Activated CD4-positive, alpha-beta T cell treated with anti-CD3 and anti-CD28 coated beads, Interleukin-2, amount 10 ng/mL, durations not matched to agents 24 days and 14 days (primary cell): ENCODE measurements at regions of chr13 and their contacts with region 1.

Region 1: GRCh38 chr13:32427852-32428580 is at the start of gene N4BP2L1:
- DNase-seq: peak; percentile 94
- H3K4me3 Mint-ChIP-seq: peak within 1 kb of the TSS; percentile 99
- H3K27ac Mint-ChIP-seq: peak within 1 kb of the TSS; percentile 98
- H3K4me1 Mint-ChIP-seq: peaks cover 44% of the 10 kb centered on the region
- H3K27me3 Mint-ChIP-seq: no peaks in the 10 kb centered on the region
- total RNA-seq, gene N4BP2L1: 16.6 and 17.9 TPM in 2 replicates

Region 2: DNA sequence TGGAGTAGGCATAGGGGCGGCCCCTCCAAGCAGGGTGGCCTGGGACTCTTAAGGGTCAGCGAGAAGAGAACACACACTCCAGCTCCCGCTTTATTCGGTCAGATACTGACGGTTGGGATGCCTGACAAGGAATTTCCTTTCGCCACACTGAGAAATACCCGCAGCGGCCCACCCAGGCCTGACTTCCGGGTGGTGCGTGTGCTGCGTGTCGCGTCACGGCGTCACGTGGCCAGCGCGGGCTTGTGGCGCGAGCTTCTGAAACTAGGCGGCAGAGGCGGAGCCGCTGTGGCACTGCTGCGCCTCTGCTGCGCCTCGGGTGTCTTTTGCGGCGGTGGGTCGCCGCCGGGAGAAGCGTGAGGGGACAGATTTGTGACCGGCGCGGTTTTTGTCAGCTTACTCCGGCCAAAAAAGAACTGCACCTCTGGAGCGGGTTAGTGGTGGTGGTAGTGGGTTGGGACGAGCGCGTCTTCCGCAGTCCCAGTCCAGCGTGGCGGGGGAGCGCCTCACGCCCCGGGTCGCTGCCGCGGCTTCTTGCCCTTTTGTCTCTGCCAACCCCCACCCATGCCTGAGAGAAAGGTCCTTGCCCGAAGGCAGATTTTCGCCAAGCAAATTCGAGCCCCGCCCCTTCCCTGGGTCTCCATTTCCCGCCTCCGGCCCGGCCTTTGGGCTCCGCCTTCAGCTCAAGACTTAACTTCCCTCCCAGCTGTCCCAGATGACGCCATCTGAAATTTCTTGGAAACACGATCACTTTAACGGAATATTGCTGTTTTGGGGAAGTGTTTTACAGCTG is 112.6 kb before region 1 on chr13 and contains the starts of genes BRCA2 and ZAR1L:
- intact Hi-C with region 1: loop called (anchors 1 kb)
- DNase-seq: peak; percentile 97
- H3K4me3 Mint-ChIP-seq: peak within 1 kb of the TSS; percentile 96
- H3K27ac Mint-ChIP-seq: peak within 1 kb of the TSS; percentile 100
- H3K4me1 Mint-ChIP-seq: peaks cover 24% of the 10 kb centered on the region
- H3K27me3 Mint-ChIP-seq: no peaks in the 10 kb centered on the region
- total RNA-seq, gene BRCA2: 23.1 and 24.7 TPM in 2 replicates
- total RNA-seq, gene ZAR1L: 0.19 TPM in 1 of 2 replicates, not detected in the other

Region 3: DNA sequence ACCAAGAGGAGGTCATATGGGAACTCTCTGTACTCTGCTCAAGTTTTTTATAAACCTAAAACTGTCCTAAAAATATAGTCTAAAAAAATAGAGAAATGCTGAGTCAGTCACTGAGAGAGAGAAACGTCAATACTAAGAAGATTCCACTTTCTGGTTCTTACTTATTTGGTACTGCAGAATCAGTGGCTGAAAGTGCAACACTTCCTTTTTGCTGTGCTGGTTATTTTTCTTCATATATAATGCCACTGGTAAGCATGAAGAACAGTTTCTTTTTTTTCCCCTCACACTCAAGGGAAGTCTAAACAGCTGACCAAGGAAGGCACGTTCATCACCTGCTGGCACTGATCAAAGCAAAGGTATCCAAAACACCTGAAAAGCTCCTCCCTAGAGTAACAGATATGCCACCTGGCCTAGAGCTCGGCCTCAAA is 44.2 kb after region 1 on chr13:
- intact Hi-C with region 1: loop called (anchors 2 kb)
- DNase-seq: no peak
- H3K4me3 Mint-ChIP-seq: no peak overlapping the region
- H3K27ac Mint-ChIP-seq: peak overlapping the region; percentile 54
- H3K4me1 Mint-ChIP-seq: peaks cover 15% of the 10 kb centered on the region
- H3K27me3 Mint-ChIP-seq: no peaks in the 10 kb centered on the region

Region 4: GRCh38 chr13:32538621-32539246 is 110.7 kb after region 1 on chr13 and contains the start of gene N4BP2L2:
- intact Hi-C with region 1: loop called (anchors 1 kb)
- DNase-seq: peak; percentile 97
- H3K4me3 Mint-ChIP-seq: peak within 1 kb of the TSS; percentile 98
- H3K27ac Mint-ChIP-seq: peak within 1 kb of the TSS; percentile 99
- H3K4me1 Mint-ChIP-seq: peaks cover 37% of the 10 kb centered on the region
- H3K27me3 Mint-ChIP-seq: peaks cover 8% of the 10 kb centered on the region
- total RNA-seq, gene N4BP2L2: 87.5 and 88.0 TPM in 2 replicates

Region 5: DNA sequence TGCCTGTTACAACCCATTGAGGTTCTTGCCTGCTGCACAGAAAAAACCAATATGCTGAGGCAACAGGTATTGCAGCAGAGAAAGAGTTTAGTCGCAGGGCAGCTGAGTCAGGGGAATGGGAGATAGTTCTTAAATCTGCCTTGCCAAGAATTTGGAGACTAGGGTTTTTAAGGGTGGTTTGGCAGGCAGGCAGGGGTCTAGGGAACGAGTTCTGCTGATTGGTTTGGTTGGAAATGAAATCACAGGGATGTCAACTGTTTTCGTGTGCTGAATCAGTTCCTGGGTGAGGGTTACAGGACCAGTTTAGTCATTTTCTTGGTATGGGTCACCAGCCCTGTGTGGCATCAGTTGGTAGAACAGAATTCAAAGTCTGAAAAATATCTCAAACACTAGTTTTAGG is 194.8 kb after region 1 on chr13:
- intact Hi-C with region 1: no loop called
- DNase-seq: no peak
- H3K4me3 Mint-ChIP-seq: no peak overlapping the region
- H3K27ac Mint-ChIP-seq: peak overlapping the region; percentile 59
- H3K4me1 Mint-ChIP-seq: peaks cover 15% of the 10 kb centered on the region
- H3K27me3 Mint-ChIP-seq: no peaks in the 10 kb centered on the region